ENCODE measurements at regions of chr12 and their contacts with region 1.

Region 1: GRCh38 chr12:52949413-52950331 is 754 bp downstream of the KRT18 start:
- DNase-seq: peak; percentile 98
- H3K4me3 Mint-ChIP-seq: peak overlapping the region; percentile 95
- H3K27ac Mint-ChIP-seq: peak overlapping the region; percentile 86
- H3K4me1 Mint-ChIP-seq: peaks cover 57% of the 10 kb centered on the region
- H3K27me3 Mint-ChIP-seq: no peaks in the 10 kb centered on the region
- CTCF ChIP-seq: no peak

Region 2: DNA sequence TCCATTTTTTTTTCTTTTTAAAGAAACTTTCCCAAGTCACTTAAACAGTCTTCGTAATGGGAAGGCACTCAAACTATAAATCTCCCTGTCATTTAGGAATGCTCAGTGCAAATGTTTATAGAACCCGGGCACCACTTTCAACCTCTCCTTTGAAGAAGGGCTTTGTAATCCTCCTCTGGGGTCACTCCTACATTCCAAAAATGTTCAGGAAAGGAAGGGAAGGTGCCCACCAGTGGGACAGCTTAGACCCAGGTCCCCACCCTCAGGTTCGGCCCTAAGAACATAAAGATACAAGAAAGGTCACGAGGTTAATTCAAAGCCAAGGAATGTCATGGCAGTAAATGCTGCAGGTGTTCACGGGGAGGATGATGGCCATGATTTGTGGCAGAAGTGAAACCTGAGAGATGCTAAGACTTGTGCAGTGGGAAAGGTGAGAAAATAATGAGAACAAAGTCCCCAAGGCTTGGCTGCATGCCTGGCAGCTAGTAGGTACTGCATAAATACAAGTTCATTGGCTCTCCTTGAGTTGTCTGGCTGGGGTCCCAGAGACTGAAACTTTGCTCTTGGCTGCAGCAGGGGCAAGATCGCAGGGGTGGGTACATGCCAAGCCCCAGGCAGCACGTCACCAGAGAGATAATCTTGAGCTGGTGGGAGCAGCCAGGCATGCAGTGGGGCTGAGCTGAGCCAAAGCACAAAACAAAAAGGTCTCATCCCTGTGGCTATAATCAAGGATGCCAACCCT is 20.3 kb after region 1 on chr12:
- CTCF ChIA-PET with region 1: interaction called, 5 read pairs
- POLR2A ChIA-PET with region 1: interaction called, 60 read pairs
- intact Hi-C with region 1: loop called (anchors 2 kb)
- DNase-seq: peak; percentile 60
- H3K4me3 Mint-ChIP-seq: no peak overlapping the region
- H3K27ac Mint-ChIP-seq: peak overlapping the region; percentile 39
- H3K4me1 Mint-ChIP-seq: peaks cover 23% of the 10 kb centered on the region
- H3K27me3 Mint-ChIP-seq: no peaks in the 10 kb centered on the region
- CTCF ChIP-seq: no peak

Measured in MCF 10A (cell line).